Posterior vena cava (tissue), 2 donors: ENCODE measurements at regions of chr1 and their contacts with region 1.

Region 1: GRCh38 chr1:21251773-21252471 is 38.3 kb downstream of the ECE1 start:
- DNase-seq: peak; percentile 90

Region 2: GRCh38 chr1:21334214-21335087 is 82.5 kb after region 1 on chr1:
- intact Hi-C with region 1: loop called in 1 of 2 experiments (anchors 5 kb)
- DNase-seq: peak; percentile 94

Region 3: GRCh38 chr1:21368515-21369289 is 116.8 kb after region 1 on chr1:
- intact Hi-C with region 1: loop called in 1 of 2 experiments (anchors 5 kb)
- DNase-seq: peak; percentile 92

Region 4: GRCh38 chr1:21564521-21565095 is 312.7 kb after region 1 on chr1:
- intact Hi-C with region 1: no loop called
- DNase-seq: no peak